HEK293 (cell line): ENCODE measurements at regions of chr1 and their contacts with region 1.

Region 1: GRCh38 chr1:209784265-209785169 is at the start of gene C1orf74:
- H3K4me3 ChIP-seq: peak within 1 kb of the TSS; percentile 74
- H3K27ac ChIP-seq: peak within 1 kb of the TSS; percentile 14; the same call in 1 of the 2 replicates
- H3K4me1 ChIP-seq: no peaks in the 10 kb centered on the region
- CTCF ChIP-seq: 0 out of 2 replicates have a peak, but pooled peaks have one; percentile 17

Region 2: GRCh38 chr1:209797978-209798639 is 13.6 kb after region 1 on chr1:
- CTCF ChIA-PET with region 1: interaction called, 4 read pairs
- POLR2A ChIA-PET with region 1: interaction called, 12 read pairs
- H3K4me3 ChIP-seq: no peak overlapping the region
- H3K27ac ChIP-seq: no peak overlapping the region
- H3K4me1 ChIP-seq: peaks cover 11% of the 10 kb centered on the region; the same call in 1 of the 2 replicates
- CTCF ChIP-seq: no peak

Region 3: DNA sequence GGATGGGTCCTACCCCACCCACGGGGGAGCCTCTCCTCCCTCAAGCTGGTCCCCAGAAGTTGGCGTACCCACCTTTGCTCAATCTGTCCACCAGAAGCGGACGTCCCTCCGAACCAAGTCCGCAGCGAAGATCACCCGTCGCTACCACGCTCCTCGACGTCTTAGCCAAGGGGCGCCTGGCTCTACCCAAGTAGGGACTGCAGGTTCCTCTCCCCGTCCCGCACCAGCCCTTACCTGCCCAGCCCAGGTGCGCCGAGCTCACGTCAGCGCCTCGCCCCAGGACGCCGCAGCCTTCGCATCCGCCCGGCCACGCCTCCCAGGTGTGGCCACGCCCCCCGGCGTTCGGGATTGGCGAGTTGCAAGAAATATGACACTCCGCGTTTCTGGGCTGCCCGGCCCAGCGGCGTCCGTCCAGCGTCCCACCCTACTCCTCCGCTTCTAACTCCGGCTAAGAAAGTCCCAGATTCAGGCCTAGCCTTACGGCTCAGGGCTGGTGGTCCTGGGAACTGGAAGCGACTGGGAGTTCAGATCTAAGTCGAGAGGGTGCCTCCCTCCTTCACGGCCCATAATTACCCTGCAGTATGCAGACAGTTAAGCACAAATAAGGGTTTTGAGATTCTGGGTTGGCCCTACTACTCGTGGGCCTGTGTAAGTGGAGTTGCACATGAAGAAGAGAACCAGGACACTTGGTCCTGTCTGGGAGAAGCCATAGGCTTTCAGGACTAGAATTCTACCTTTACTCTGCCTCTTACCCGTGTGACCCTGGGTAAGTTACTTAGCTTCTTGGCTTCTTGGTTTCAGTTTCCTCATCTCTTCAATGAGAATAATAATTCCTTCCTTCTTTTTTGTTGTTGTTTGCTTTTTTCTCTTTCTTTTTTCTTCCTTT is 21.6 kb after region 1 on chr1 and contains the start of gene IRF6:
- CTCF ChIA-PET with region 1: interaction called, 3 read pairs
- POLR2A ChIA-PET with region 1: interaction called, 15 read pairs
- H3K4me3 ChIP-seq: peak within 1 kb of the TSS; percentile 85
- H3K27ac ChIP-seq: peak within 1 kb of the TSS; percentile 78
- H3K4me1 ChIP-seq: peaks cover 19% of the 10 kb centered on the region
- CTCF ChIP-seq: no peak